Right cardiac atrium (tissue), 5 donors: ENCODE measurements at regions of chr4 and their contacts with region 1.

Region 1: GRCh38 chr4:151362404-151363164 is 37.2 kb upstream of the SH3D19 start:
- DNase-seq: peak; percentile 82 to 90 (median 90)
- ATAC-seq: peak; percentile 92 to 97
- H3K4me3 ChIP-seq: no peak overlapping the region
- H3K27ac ChIP-seq: no peak overlapping the region
- H3K4me1 ChIP-seq: no peaks in the 10 kb centered on the region
- H3K27me3 ChIP-seq: no peaks in the 10 kb centered on the region

Region 2: DNA sequence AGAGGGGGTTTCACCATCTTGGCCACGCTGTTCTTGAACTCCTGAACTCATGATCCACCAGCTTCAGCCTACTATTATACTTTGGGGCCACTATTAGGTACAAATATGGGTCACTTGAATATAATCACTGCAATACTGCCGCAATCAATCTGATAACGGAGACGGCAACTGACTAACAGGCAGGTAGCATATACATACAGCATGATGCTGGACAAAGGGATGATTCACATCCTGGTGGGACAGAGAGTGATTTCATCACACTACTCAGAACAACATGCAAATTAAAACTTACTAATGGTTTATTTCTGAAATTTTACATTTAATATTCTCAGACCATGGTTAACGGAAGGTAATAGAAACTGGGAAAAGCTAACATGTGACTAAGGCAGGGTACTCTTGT is 358.4 kb before region 1 on chr4:
- intact Hi-C with region 1: no loop called
- DNase-seq: no peak
- ATAC-seq: no peak
- H3K4me3 ChIP-seq: no peak overlapping the region
- H3K27ac ChIP-seq: no peak overlapping the region
- H3K4me1 ChIP-seq: no peaks in the 10 kb centered on the region
- H3K27me3 ChIP-seq: no peaks in the 10 kb centered on the region

Region 3: GRCh38 chr4:151117371-151117962 is 245.1 kb before region 1 on chr4:
- intact Hi-C with region 1: loop called in 3 of 4 experiments (anchors 5 to 10 kb)
- DNase-seq: peak in 2 of 3 donors; percentile 36 to 76
- ATAC-seq: peak; percentile 61 to 69
- H3K4me3 ChIP-seq: no peak overlapping the region
- H3K27ac ChIP-seq: no peak overlapping the region
- H3K4me1 ChIP-seq: peaks cover 3% of the 10 kb centered on the region
- H3K27me3 ChIP-seq: no peaks in the 10 kb centered on the region

Region 4: DNA sequence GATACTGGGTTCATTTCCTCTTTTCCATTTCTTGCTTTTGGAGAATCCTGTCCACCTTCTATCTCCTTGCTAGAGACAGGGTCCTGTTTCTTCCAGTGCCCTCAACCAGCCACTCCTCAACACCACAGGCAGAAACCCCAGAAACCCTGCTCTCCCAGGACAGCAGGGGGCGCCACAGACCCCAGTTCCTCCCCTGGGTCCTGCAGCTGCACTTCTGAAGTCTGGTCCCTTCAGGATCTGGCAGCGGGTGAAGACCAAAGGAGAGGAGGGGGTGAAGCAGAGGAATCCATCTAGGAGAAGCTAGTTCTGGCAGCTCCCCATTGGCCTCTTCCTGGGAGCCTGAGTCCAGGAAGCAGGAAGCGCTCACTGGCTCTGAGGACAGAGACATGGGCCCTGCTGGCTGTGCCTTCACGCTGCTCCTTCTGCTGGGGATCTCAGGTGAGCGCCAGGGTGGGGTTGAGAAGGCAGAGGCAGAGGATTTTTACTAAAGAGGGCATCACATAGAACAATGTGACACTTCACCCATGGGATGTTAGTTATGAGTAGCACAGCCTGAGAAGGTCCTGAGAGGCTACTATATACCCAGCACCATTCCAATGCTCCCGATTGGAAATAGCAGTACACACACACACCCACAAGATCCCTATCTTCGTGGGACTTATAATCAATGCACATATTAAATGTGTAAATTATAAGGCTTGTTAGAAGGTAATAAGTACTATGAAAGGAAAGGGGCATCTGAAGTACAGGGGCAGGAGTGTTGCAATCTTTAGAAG is 85.6 kb before region 1 on chr4 and contains the start of gene PRSS48:
- intact Hi-C with region 1: loop called in 3 of 4 experiments (anchors 2 to 10 kb)
- DNase-seq: peak; percentile 53 to 83 (median 79)
- ATAC-seq: peak; percentile 69 to 81
- H3K4me3 ChIP-seq: no peak within 1 kb of the TSS
- H3K27ac ChIP-seq: no peak within 1 kb of the TSS
- H3K4me1 ChIP-seq: peaks cover 16% of the 10 kb centered on the region
- H3K27me3 ChIP-seq: no peaks in the 10 kb centered on the region
- total RNA-seq, gene PRSS48: not detected